ENCODE measurements at regions of chr22 and their contacts with region 1.

Region 1: DNA sequence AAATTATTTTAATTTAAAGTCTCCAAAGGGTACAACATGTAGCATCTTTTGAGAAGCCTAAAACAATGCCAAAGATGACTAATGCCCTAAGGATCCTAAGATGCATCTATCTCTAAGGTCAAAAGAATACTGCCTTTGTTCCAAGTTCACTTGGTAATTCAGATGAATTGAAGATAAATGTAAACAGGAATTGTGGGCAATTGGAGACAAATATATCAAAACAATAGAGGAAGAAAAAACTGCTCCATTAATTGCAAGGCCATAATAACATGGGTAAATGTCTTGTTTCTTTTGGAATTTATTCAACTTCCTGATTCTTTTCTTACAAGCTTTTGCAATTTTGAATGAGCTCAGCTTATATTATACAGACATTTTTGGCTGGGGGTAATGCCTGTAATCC is 338.6 kb downstream of the TTC28 start:
- DNase-seq: no peak

Region 2: DNA sequence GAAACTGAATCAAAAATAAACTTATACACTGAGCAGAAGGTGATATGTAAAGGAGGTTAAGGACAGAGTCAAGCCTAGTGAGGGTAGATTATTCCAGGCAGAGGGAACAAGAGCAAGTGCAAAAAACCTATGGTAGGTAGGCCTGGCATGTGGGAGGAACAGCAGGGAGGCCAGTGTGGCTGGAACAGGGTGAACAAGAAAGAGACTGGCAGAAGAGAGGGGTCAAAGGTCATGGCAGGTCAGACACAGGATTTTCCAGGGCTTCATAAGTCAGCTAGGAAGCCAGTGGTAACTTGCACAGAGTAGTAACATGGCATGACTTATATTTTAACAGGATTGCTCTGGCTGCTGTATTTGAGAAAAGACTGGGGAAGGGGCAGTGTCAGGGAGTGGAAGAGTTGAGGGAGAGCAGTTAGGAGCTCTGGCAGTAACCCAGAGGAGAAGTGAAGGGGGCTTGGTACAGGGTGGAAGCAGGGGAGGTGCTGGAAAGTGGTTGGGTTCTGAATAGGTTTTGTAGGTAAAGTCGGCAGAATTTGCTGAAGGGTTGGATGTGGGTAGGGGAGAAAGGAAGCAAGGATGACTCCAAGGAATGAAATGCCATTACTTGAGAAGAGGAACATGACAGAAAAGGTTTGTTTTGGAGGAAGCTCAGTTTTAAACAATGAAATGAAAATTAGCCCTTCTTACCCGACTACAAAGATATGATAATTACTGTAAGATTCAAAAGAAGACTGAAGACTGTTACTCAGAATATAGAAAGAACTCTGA is 628.6 kb after region 1 on chr22:
- intact Hi-C with region 1: loop called (anchors 10 kb)
- DNase-seq: no peak